ENCODE measurements at regions of chr2 and their contacts with region 1.

Region 1: GRCh38 chr2:44291281-44292248 is 16.3 kb downstream of the SLC3A1 start:
- H3K4me3 Mint-ChIP-seq: no peak overlapping the region
- H3K27ac Mint-ChIP-seq: no peak overlapping the region
- H3K4me1 Mint-ChIP-seq: peaks cover 6% of the 10 kb centered on the region
- H3K27me3 Mint-ChIP-seq: peaks cover 8% of the 10 kb centered on the region

Region 2: DNA sequence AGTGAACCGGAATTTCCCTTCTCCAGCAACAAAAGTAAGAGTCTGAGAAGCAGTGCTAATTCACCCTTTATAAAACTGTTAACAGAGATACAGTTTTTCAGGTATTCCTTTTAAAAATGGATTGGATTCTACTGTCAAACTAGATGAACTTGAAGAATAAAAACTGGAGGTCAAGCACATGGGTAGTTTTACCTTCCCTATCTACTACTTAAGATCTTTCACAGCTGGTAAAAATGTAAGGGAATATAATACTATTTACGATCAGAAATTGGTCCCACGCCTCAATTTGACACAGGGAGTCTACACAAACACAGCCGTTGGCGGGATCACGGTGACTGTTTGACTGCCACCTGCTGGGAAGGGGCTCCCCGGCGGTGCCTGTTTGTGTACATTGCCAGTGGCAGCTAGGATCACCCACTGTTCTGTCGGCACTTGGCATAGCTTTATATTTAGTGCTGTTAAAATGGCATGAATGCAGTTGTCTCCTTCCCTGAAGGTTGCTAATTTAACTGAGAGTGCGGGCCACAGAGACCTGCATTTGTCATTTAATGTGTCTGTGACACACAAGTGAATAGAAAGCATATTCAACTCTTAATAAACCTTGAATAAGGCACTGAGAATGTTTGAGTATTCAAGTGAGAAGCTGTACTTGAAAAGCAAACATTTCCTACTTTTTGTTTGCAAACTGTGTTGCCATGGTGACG is 393.3 kb before region 1 on chr2:
- intact Hi-C with region 1: no loop called
- H3K4me3 Mint-ChIP-seq: no peak overlapping the region
- H3K27ac Mint-ChIP-seq: no peak overlapping the region
- H3K4me1 Mint-ChIP-seq: no peaks in the 10 kb centered on the region
- H3K27me3 Mint-ChIP-seq: no peaks in the 10 kb centered on the region

Region 3: DNA sequence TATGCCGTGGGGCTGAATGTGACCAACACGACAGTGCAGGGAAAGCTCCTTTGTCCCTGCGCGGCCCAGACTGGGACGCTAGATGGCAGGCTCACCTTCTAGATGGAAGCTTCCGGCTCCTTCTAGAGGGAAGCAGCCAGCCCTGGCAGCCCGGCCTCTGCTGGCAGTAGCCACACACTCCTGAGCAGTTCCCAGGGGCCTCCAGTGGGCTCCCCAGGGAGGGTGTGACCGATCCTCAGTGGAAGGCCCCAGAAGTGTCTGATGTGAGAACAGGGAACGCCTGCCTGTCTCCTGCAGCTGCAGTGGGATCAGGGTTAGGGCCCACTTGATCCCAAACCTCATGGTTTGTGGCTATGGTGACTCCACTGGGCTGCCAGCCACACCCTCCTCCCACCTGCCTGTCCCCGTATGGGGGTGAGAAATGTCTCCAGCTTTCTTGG is 247.3 kb before region 1 on chr2:
- intact Hi-C with region 1: loop called (anchors 1 kb)
- H3K4me3 Mint-ChIP-seq: no peak overlapping the region
- H3K27ac Mint-ChIP-seq: no peak overlapping the region
- H3K4me1 Mint-ChIP-seq: no peaks in the 10 kb centered on the region
- H3K27me3 Mint-ChIP-seq: peaks cover 2% of the 10 kb centered on the region

Region 4: GRCh38 chr2:44233450-44234128 is 58.0 kb before region 1 on chr2:
- intact Hi-C with region 1: no loop called
- H3K4me3 Mint-ChIP-seq: no peak overlapping the region
- H3K27ac Mint-ChIP-seq: no peak overlapping the region
- H3K4me1 Mint-ChIP-seq: no peaks in the 10 kb centered on the region
- H3K27me3 Mint-ChIP-seq: no peaks in the 10 kb centered on the region

Measured in dendritic cell treated with granulocyte-macrophage colony-stimulating factor and Interleukin-4, amounts not matched to agents 40 ng/mL and 50 ng/mL, for 4 days (primary cell).